ENCODE measurements at regions of chr9 and their contacts with region 1.

Region 1: DNA sequence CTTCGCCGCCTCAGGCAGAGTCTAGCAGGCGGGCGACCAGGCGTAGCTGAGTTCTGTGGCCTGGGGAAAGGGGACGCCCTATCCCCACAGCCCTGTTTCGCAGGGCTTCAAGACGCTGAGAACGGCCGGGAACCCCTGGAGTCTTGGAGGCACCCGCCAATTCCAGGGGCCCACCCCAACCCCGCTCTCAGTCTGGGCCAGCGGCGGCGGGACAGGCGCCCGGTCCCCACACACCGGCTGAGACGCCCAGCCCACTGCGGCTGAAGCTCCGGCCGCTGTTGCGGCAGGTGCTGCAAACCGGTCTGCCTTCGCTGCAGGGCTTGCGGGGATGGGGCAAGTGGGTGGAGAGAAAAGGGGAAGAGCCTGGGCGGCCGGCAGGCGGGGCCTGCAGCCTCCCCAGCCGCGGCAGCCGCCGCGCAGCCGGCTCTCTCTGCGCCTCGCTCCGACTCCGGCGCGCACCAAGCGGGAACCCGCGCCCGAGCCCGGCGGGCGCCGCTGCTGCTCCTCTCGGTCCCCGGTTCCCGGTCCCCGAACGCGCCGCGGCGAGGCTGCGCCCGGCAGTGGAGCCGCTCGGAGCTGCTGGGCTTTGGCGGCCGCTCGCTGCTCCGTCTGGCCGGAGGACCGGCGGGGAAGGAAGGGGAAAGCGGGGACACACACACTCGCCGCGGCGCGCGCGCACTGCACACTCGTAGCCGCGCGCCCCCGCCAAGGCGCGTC is at the start of gene PIP5K1B:
- DNase-seq: peak; percentile 76 to 87 (median 84)
- ATAC-seq: peak; percentile 57 to 92 (median 86)
- H3K4me3 ChIP-seq: peak within 1 kb of the TSS; percentile 44 to 94 (median 68)
- H3K27ac ChIP-seq: peak within 1 kb of the TSS; percentile 71 to 95 (median 88)
- H3K4me1 ChIP-seq: peaks cover 0 to 31% (median 12%) of the 10 kb centered on the region in 12 donors
- H3K27me3 ChIP-seq: peaks cover 0 to 24% (median 5%) of the 10 kb centered on the region in 9 donors
- CTCF ChIP-seq: peak in 4 of 12 donors; percentile 19 to 36 (median 24)
- POLR2A ChIP-seq: peak in 1 of 2 donors; percentile 59
- total RNA-seq, gene PIP5K1B: 28.0 to 68.0 (median 47.5) TPM

Region 2: GRCh38 chr9:68446836-68447235 is 258.1 kb before region 1 on chr9:
- intact Hi-C with region 1: no loop called
- DNase-seq: no peak
- ATAC-seq: peak; percentile 38 to 61 (median 48)
- H3K4me3 ChIP-seq: no peak overlapping the region
- H3K27ac ChIP-seq: peak overlapping the region in 6 of 12 donors; percentile 24 to 82 (median 40)
- H3K4me1 ChIP-seq: peaks cover 0 to 53% (median 16%) of the 10 kb centered on the region in 12 donors
- H3K27me3 ChIP-seq: no peaks in the 10 kb centered on the region
- CTCF ChIP-seq: no peak
- POLR2A ChIP-seq: no peak

Region 3: DNA sequence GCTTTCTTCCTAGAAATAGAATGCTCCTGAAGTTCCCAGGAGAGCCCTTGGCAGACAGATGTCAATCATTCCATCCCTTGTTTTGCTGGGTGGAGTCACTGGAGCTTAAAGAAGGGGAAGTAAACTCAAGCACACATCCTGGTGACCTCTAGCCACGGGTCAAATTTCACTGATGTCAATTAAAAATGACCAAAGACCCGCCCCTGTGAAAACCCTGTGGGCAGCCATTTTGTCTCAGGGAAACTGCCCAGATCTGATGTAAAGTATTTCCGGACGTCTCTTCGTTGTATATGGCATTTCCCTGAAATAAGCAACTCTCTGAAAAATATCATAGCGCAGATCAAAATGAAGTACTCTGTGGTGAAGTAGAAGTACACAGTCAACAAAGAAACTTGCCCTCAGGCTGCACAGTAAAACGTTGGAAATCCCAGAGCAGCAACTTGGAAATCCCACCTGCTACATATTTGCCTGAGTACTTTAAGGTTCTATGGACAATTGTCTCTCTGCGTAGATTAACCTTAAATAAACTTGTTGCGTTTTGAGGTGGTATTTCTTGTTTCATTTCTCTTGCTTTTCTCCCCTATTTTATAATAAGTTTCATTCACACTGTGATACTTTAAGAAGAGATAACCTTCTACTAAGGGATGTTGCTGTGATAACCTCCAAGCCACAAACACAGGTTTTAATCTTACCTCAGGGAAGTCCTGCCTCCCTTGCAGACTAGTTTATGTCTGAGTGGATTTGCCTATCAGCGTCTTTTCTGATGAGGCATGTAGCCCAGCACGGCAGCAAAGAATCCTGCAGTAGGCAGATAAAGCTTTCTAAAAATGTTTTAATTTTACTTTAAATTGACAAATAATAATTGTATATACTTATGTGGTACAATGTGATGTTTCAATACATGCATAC is 60.8 kb before region 1 on chr9:
- intact Hi-C with region 1: no loop called
- DNase-seq: no peak
- ATAC-seq: no peak
- H3K4me3 ChIP-seq: no peak overlapping the region
- H3K27ac ChIP-seq: no peak overlapping the region
- H3K4me1 ChIP-seq: peaks cover 0 to 2% (median 0%) of the 10 kb centered on the region in 12 donors
- H3K27me3 ChIP-seq: no peaks in the 10 kb centered on the region
- CTCF ChIP-seq: no peak
- POLR2A ChIP-seq: no peak

Region 4: DNA sequence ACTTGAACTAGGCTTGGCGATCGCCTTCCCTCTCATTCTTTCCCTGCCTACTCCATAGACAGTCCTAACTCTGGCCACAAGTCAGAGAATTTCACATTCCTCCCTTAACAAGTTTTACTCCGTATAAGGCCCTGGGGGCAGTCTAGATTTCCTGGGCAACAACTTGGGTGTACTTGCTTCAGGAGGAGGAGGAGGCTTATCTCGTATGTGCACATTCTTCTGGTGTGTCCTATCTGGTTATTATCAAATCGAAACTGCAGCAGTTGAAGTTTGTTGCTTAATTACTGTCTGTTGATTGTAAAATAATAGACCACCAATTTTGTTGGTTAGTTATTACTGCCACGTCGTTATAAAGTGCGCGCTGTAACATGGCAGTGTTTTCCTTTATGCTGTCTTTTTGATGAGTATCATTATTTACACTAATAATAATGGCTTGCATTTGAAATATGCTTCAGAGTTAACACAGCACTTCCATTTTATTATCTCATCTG is 42.1 kb after region 1 on chr9:
- intact Hi-C with region 1: loop called in 1 of 10 experiments (anchors 5 kb)
- DNase-seq: no peak
- ATAC-seq: peak in 2 of 4 donors; percentile 27 to 33
- H3K4me3 ChIP-seq: no peak overlapping the region
- H3K27ac ChIP-seq: peak overlapping the region in 5 of 12 donors; percentile 10 to 65 (median 52)
- H3K4me1 ChIP-seq: peaks cover 0 to 40% (median 10%) of the 10 kb centered on the region in 12 donors
- H3K27me3 ChIP-seq: no peaks in the 10 kb centered on the region
- CTCF ChIP-seq: no peak
- POLR2A ChIP-seq: no peak

Region 5: DNA sequence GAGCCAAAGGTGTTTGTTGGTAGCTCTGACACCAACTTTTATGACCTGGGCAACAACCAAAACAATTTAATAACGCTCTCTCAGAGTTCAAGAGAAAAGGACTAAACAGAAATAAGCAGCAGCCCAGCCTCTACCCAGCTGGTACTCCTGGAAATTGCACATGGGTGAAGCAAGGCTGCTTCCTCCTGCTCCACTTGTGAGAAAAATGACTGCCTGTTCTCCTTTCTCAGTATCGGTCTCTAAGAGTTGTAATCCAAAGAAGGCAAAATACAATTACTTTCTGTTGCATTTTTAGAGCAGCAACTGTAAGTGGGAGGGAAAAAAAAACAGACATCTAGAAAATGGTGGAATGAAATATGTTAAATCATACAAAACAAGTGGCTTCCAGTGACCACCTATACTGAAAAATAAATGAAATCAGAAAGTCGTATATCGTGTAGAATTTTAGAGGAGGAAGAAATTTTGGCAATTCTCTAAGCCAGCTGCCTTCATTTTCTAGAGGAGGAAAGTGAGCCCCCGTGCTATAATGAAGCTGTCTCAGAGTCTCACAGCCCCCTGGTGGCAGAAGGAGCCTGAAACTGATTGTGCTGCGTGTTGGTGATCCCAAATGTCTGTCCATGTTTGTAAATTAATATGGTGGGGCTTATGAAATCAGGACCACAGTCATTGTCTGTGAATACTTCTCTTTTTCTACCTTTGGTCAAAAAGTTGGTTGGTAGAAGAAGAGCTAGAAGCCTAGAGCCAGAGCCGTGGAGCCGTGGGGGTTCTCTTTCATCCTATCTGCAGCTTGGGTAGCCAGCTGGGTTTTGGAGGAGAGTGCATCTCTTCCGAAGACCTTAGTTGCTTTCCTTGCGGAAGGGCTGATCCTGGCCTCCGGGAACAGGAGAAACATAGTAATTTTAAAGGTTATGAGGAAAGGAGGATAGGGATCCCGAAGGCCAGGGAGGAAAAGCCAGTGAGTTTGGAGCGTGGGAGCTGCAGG is 139.9 kb after region 1 on chr9:
- intact Hi-C with region 1: loop called in 6 of 10 experiments (anchors 5 to 10 kb)
- DNase-seq: peak in 2 of 5 donors; percentile 33 to 48
- ATAC-seq: peak in 3 of 4 donors; percentile 40 to 62 (median 48)
- H3K4me3 ChIP-seq: peak overlapping the region in 2 of 12 donors; percentile 25 to 37
- H3K27ac ChIP-seq: peak overlapping the region in 1 of 12 donors; percentile 78
- H3K4me1 ChIP-seq: peaks cover 0 to 35% (median 12%) of the 10 kb centered on the region in 12 donors
- H3K27me3 ChIP-seq: no peaks in the 10 kb centered on the region
- CTCF ChIP-seq: peak; percentile 16 to 65 (median 48)
- POLR2A ChIP-seq: no peak

Region 6: GRCh38 chr9:68974431-68974830 is 269.5 kb after region 1 on chr9:
- intact Hi-C with region 1: loop called in 1 of 10 experiments (anchors 5 kb)
- DNase-seq: no peak
- ATAC-seq: peak in 2 of 4 donors; percentile 21 to 23
- H3K4me3 ChIP-seq: peak overlapping the region; percentile 22 to 65 (median 58)
- H3K27ac ChIP-seq: peak overlapping the region; percentile 37 to 91 (median 82)
- H3K4me1 ChIP-seq: peaks cover 0 to 42% (median 9%) of the 10 kb centered on the region in 12 donors
- H3K27me3 ChIP-seq: no peaks in the 10 kb centered on the region
- CTCF ChIP-seq: no peak
- POLR2A ChIP-seq: no peak

Measured in heart left ventricle (tissue), 16 donors.